A549 (cell line): ENCODE measurements at regions of chr20 and their contacts with region 1.

Region 1: DNA sequence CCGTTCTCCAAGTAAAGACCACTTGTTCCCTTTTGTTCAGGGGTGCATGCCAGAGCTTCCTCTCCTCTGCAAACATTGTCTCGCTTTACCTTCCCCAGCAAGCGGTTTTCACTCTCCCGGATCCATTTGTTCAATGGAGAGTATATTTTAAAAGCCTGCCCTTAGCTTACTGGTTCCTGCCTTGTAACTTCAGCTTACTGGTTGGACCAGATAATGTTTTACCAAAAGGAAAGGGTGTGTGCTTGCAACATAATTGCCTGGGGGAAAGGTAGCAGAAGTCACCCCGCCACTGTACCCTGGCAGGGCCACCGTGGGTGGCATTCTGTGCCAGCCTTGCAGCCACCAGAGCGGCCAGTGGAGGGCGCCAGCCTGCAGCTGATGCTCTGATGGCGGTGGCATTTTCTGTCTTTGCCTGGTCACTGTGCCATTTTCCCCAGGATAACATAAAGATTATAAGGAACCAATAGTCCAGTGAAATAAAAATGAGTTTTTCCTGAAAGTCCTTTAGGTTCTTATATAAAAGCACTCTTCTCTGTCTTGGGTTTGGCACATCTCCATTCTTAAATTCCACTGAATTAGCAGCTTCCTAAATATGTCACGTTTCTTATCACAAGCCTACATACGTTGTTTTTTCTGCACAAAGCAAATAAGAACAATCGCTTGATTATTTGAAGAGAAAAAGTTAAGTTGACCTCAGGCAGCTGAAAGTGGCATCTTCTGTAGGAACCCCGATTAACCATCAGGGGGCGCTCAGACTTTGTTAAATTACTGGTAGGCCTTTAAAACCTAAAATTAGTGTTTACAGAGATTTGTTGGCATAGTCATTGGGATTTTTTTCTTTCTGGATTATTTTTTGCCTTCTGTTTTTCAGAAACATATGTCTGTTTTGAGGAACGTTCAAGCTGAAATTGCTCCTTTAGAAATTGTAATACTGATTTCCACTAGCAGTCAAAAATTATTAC is 67.4 kb upstream of the XRN2 start:
- DNase-seq: peak; percentile 50 to 78
- ATAC-seq: peak; percentile 90 to 92
- H3K4me3 ChIP-seq: no peak overlapping the region
- H3K27ac ChIP-seq: no peak overlapping the region
- H3K4me1 ChIP-seq: peaks cover 6% of the 10 kb centered on the region; the same call in 1 of the 3 replicates
- CTCF ChIP-seq: peak; percentile 98
- EP300 ChIP-seq: no peak
- POLR2A ChIP-seq: no peak
- RAD21 ChIP-seq: peak; percentile 78 to 85

Region 2: DNA sequence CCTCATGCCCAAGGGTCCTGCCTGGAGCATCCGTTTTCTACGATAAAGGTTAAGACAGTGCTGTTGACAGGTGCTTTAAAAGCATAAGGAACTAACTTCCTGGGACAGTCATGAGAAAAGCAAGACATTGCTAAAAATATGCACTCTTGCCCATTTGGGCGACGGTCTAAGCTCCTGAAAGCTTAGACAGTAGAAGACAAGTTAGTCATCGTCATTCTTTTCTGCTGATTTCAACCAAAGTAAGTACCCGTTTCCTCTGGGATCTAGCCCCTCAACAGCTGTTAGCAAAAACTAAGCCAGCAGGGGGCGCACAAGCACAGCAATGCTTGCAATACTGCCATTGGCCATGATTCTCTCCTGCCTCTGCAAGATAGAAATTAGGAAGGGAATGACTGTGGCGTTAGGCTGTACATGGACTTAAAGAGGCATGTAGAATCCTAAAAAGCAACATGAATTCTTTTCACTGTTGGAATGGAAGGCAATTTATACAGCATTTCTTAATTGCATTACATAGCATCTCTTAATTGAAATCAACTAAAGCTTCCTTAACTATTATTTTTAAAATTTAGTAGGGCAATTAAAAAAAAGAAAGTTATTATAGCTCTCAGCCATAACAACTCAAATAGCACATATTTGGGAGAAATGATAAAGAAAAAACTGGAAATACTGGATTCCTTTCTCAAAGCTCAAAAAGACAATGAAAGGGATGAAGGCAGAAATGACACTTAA is 375.5 kb before region 1 on chr20:
- CTCF ChIA-PET with region 1: interaction called, 19 read pairs
- POLR2A ChIA-PET with region 1: no interaction called
- DNase-seq: peak; percentile 87 to 92
- ATAC-seq: peak; percentile 93 to 97
- H3K4me3 ChIP-seq: no peak overlapping the region
- H3K27ac ChIP-seq: no peak overlapping the region
- H3K4me1 ChIP-seq: no peaks in the 10 kb centered on the region
- CTCF ChIP-seq: peak; percentile 95
- EP300 ChIP-seq: no peak
- POLR2A ChIP-seq: no peak
- RAD21 ChIP-seq: peak; percentile 81 to 88

Region 3: GRCh38 chr20:21189761-21190523 is 45.8 kb before region 1 on chr20:
- CTCF ChIA-PET with region 1: interaction called, 10 read pairs
- POLR2A ChIA-PET with region 1: no interaction called
- DNase-seq: no peak
- ATAC-seq: no peak
- H3K4me3 ChIP-seq: no peak overlapping the region
- H3K27ac ChIP-seq: no peak overlapping the region
- H3K4me1 ChIP-seq: peaks cover 2% of the 10 kb centered on the region; the same call in 2 of the 3 replicates
- CTCF ChIP-seq: no peak
- EP300 ChIP-seq: no peak
- POLR2A ChIP-seq: no peak
- RAD21 ChIP-seq: no peak

Region 4: GRCh38 chr20:21259346-21259745 is 23.6 kb after region 1 on chr20:
- CTCF ChIA-PET with region 1: interaction called, 36 read pairs
- POLR2A ChIA-PET with region 1: no interaction called
- DNase-seq: no peak
- ATAC-seq: no peak
- H3K4me3 ChIP-seq: no peak overlapping the region
- H3K27ac ChIP-seq: no peak overlapping the region
- H3K4me1 ChIP-seq: no peaks in the 10 kb centered on the region
- CTCF ChIP-seq: no peak
- EP300 ChIP-seq: no peak
- POLR2A ChIP-seq: no peak
- RAD21 ChIP-seq: no peak

Region 5: GRCh38 chr20:21352703-21353102 is 116.9 kb after region 1 on chr20:
- CTCF ChIA-PET with region 1: interaction called, 10 read pairs
- POLR2A ChIA-PET with region 1: no interaction called
- DNase-seq: no peak
- ATAC-seq: 0 out of 6 replicates have a peak, but pooled peaks of 1 of the 2 experiments have one; percentile 34
- H3K4me3 ChIP-seq: no peak overlapping the region
- H3K27ac ChIP-seq: no peak overlapping the region
- H3K4me1 ChIP-seq: 0 out of 3 replicates have a peak, but pooled peaks cover 3% of the 10 kb centered on the region
- CTCF ChIP-seq: no peak
- EP300 ChIP-seq: no peak
- POLR2A ChIP-seq: no peak
- RAD21 ChIP-seq: no peak

Region 6: GRCh38 chr20:21511850-21512633 is 276.3 kb after region 1 on chr20:
- CTCF ChIA-PET with region 1: interaction called, 610 read pairs
- POLR2A ChIA-PET with region 1: no interaction called
- DNase-seq: no peak
- ATAC-seq: peak in 1 of 2 experiments; percentile 37; a peak in 4 of 6 replicates
- H3K4me3 ChIP-seq: peak overlapping the region; percentile 49
- H3K27ac ChIP-seq: no peak overlapping the region
- H3K4me1 ChIP-seq: peaks cover 36% of the 10 kb centered on the region
- CTCF ChIP-seq: no peak
- EP300 ChIP-seq: no peak
- POLR2A ChIP-seq: no peak
- RAD21 ChIP-seq: no peak